ENCODE measurements at regions of chr9 and their contacts with region 1.

Region 1: GRCh38 chr9:97982683-97983588 is at the start of gene ANP32B:
- DNase-seq: peak; percentile 92 to 97 (median 94)
- ATAC-seq: peak; percentile 74 to 82
- H3K4me3 Mint-ChIP-seq: peak within 1 kb of the TSS; percentile 78 to 94 (median 84)
- H3K27ac Mint-ChIP-seq: peak within 1 kb of the TSS; percentile 18 to 96 (median 91)
- H3K4me1 Mint-ChIP-seq: peaks cover 26 to 61% (median 52%) of the 10 kb centered on the region in 4 donors
- H3K27me3 Mint-ChIP-seq: no peaks in the 10 kb centered on the region
- polyA plus RNA-seq, gene ANP32B: 87.8 to 110 (median 108) TPM

Region 2: DNA sequence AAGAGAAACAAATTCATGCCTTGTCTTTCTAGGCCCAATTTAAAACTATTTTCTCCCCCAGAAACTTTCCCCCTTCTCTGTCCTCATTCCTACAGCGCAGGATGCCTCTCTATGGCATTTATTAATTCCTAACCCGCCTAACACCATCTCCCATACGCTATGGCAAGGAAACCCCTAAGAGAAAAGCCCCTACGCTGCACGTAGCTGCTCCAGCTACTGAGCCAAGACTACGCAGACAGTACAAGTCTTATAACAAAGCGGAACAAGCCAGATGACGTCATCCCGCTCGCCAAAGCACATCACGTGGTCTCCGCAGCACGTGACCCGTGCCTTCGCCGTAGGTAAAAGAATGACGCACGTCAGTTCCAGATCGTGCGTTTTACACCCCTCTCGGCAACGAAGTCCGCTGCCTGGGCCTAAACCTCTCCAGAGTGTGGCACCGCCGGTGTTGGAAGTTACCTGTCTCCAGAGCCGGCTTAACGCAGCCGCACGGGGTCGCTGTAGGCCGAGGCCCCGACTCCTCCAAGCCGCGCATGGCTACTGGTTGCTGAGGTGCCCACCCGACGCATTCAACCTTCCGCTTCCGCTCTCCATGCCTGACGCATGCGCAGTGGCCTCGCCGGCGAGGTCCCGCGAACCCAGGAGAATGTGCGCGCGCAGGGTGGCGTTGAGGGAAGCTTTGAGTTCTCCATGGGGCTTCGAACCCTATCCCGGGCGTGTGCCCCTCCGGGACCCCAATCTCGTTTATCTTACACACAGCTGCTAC is 60.8 kb before region 1 on chr9 and contains the start of gene TRMO:
- POLR2A ChIA-PET with region 1: interaction called, 200 read pairs
- DNase-seq: peak; percentile 97 to 99 (median 98)
- ATAC-seq: peak; percentile 75 to 79
- H3K4me3 Mint-ChIP-seq: peak within 1 kb of the TSS; percentile 86 to 95 (median 94)
- H3K27ac Mint-ChIP-seq: peak within 1 kb of the TSS; percentile 98 to 99 (median 99)
- H3K4me1 Mint-ChIP-seq: peaks cover 25 to 63% (median 51%) of the 10 kb centered on the region in 4 donors
- H3K27me3 Mint-ChIP-seq: peaks cover 0 to 5% (median 0%) of the 10 kb centered on the region in 5 donors
- polyA plus RNA-seq, gene TRMO: 11.7 to 18.0 (median 13.8) TPM

Region 3: GRCh38 chr9:97954550-97954989 is 28.4 kb before region 1 on chr9:
- POLR2A ChIA-PET with region 1: interaction called, 19 read pairs
- DNase-seq: peak in 9 of 10 donors; percentile 36 to 81 (median 58)
- ATAC-seq: peak; percentile 93 to 100
- H3K4me3 Mint-ChIP-seq: no peak overlapping the region
- H3K27ac Mint-ChIP-seq: peak overlapping the region in 2 of 10 donors; percentile 8 to 56
- H3K4me1 Mint-ChIP-seq: peaks cover 0 to 12% (median 4%) of the 10 kb centered on the region in 4 donors
- H3K27me3 Mint-ChIP-seq: peaks cover 0 to 4% (median 0%) of the 10 kb centered on the region in 5 donors

Region 4: DNA sequence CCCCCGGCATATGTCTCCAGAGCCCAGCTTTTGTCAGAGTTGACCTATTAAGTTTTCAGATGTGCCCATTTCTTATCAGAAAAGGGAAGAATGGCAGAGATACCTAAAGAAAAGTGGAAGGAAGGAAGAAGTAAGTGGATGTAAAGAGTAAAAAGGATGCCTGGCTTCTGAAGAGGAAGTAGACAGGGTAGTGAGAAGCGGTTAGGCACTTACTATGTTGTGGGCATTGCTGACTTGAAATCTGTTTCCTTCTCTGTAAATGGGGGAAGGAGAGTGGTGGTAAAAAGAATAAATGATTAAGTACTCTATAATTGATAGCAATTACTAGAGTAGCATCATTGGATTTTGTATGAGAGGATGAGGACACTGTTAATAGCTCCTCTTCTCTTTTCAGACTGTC is 10.1 kb after region 1 on chr9:
- POLR2A ChIA-PET with region 1: interaction called, 15 read pairs
- DNase-seq: peak in 2 of 10 donors; percentile 45 to 59
- ATAC-seq: peak; percentile 84 to 93
- H3K4me3 Mint-ChIP-seq: peak overlapping the region; percentile 26 to 70 (median 52)
- H3K27ac Mint-ChIP-seq: peak overlapping the region; percentile 14 to 87 (median 76)
- H3K4me1 Mint-ChIP-seq: peaks cover 34 to 81% (median 78%) of the 10 kb centered on the region in 4 donors
- H3K27me3 Mint-ChIP-seq: no peaks in the 10 kb centered on the region

Region 5: GRCh38 chr9:98045234-98046179 is 62.6 kb after region 1 on chr9:
- POLR2A ChIA-PET with region 1: interaction called, 19 read pairs
- DNase-seq: peak in 9 of 10 donors; percentile 9 to 80 (median 55)
- ATAC-seq: peak; percentile 97 to 98
- H3K4me3 Mint-ChIP-seq: peak overlapping the region; percentile 77 to 88 (median 82)
- H3K27ac Mint-ChIP-seq: peak overlapping the region; percentile 86 to 100 (median 93)
- H3K4me1 Mint-ChIP-seq: peaks cover 18 to 51% (median 31%) of the 10 kb centered on the region in 4 donors
- H3K27me3 Mint-ChIP-seq: peaks cover 0 to 5% (median 0%) of the 10 kb centered on the region in 5 donors

Region 6: GRCh38 chr9:98101868-98102273 is 118.9 kb after region 1 on chr9:
- POLR2A ChIA-PET with region 1: interaction called, 10 read pairs
- DNase-seq: peak; percentile 59 to 94 (median 80)
- ATAC-seq: peak; percentile 96 to 98
- H3K4me3 Mint-ChIP-seq: peak overlapping the region; percentile 60 to 86 (median 74)
- H3K27ac Mint-ChIP-seq: peak overlapping the region; percentile 88 to 99 (median 96)
- H3K4me1 Mint-ChIP-seq: peaks cover 38 to 93% (median 84%) of the 10 kb centered on the region in 4 donors
- H3K27me3 Mint-ChIP-seq: no peaks in the 10 kb centered on the region

Region 7: DNA sequence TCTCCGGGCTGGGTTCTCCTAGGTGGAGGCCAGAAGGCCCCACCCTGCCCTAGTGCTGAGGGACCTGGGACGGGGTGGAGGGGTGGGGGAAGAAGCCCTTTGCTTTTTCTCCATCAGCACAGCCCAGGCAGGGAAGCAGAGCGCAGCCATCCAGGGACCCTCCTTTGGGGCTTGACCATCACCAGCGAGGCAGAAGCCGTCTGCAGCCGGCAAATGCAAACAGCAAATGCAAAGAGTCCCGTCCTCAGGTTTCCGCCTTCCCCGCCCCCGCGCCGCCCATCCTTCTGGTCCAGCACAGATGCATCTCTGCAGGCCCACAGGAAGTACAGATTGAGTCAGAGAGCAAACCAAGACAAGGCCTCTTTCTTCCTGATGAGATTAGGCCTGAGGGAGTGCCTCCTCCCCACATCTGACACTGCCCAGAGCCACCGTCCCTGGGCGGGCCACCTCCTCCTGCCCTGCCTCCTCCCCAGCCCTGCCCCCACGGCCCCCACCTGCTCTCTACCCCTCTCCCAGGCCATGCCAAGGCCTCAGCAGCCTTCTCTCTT is 186.1 kb after region 1 on chr9:
- POLR2A ChIA-PET with region 1: no interaction called
- DNase-seq: peak in 1 of 10 donors; percentile 20
- ATAC-seq: no peak
- H3K4me3 Mint-ChIP-seq: peak overlapping the region in 2 of 10 donors; percentile 8 to 37
- H3K27ac Mint-ChIP-seq: peak overlapping the region in 9 of 10 donors; percentile 24 to 96 (median 81)
- H3K4me1 Mint-ChIP-seq: peaks cover 37 to 83% (median 69%) of the 10 kb centered on the region in 4 donors
- H3K27me3 Mint-ChIP-seq: no peaks in the 10 kb centered on the region